HEK293 (cell line): ENCODE measurements at regions of chr7 and their contacts with region 1.

Region 1: DNA sequence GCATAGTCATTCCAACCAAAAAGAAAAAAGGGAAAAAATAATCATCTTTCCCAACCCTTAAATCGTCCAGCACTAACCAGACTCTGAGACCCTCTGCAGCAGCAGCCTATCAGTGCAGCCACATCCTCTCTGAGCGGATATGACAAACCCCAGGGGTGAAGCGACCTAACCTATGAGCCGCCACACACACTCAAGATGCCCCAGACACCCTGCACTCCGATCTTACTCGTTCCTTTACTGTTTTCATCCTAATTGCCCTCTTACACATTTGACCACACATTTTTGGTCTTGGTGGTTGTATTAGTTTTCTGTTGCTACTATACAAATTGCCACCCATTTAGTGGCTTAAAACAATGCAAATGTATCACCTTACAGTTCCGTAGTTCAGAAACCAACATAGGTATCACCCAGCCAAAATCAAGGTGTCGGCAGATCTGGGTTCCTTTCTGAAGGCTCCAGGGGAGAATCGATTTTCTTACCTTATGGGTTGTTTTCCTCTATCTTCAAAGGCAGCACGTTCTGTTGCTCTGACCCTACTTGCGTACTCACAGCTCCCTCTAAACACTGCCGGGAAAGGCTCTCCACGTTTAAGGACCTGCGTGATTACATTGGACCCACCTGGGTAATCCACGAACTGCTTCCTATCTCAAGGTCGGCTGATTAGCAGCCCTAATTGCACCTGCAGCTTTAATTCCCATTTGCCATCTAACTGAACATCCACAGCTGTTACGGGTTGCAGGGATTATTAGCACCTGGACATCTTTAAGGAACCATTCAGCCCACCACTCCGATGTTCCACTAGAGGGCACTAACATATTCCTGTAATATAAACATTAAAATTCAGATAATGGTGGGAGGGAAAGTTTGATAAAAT is 37.3 kb upstream of the PRSS1 start:
- H3K4me3 ChIP-seq: no peak overlapping the region
- H3K27ac ChIP-seq: no peak overlapping the region
- H3K4me1 ChIP-seq: no peaks in the 10 kb centered on the region
- CTCF ChIP-seq: no peak

Region 2: GRCh38 chr7:142697270-142697669 is 14.7 kb before region 1 on chr7:
- CTCF ChIA-PET with region 1: interaction called, 10 read pairs
- POLR2A ChIA-PET with region 1: no interaction called
- H3K4me3 ChIP-seq: no peak overlapping the region
- H3K27ac ChIP-seq: no peak overlapping the region
- H3K4me1 ChIP-seq: no peaks in the 10 kb centered on the region
- CTCF ChIP-seq: no peak

Region 3: DNA sequence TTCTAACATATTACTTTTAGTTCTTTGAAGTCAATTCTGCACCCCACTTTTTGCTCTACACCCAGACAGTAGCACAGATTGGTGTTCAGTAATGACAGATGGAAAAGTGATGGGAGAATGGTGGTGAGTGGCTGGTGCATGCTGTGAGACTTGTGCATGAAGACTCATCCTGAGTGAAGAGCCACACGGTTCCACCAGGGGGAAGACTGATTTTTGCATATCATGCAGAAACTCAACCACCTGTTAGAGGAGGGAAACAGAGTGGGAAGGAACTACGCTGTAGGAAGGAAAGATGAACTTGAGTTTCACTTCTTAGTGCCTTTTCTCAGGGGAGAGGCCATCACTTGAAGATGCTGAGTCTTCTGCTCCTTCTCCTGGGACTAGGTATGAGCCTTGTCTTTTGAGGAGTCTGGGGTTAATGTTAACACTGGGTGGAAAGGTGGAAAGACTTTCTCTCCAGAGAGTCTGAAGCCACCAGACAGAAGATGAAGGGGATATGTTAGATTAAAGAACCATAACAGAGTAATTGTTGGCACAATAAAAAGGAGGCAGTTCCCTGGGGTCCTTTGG is 28.0 kb after region 1 on chr7:
- CTCF ChIA-PET with region 1: interaction called, 12 read pairs
- POLR2A ChIA-PET with region 1: no interaction called
- H3K4me3 ChIP-seq: no peak overlapping the region
- H3K27ac ChIP-seq: no peak overlapping the region
- H3K4me1 ChIP-seq: no peaks in the 10 kb centered on the region
- CTCF ChIP-seq: peak; percentile 16; the same call in 1 of the 2 replicates